Heart right ventricle (tissue), 16 donors: ENCODE measurements at regions of chr5 and their contacts with region 1.

Region 1: DNA sequence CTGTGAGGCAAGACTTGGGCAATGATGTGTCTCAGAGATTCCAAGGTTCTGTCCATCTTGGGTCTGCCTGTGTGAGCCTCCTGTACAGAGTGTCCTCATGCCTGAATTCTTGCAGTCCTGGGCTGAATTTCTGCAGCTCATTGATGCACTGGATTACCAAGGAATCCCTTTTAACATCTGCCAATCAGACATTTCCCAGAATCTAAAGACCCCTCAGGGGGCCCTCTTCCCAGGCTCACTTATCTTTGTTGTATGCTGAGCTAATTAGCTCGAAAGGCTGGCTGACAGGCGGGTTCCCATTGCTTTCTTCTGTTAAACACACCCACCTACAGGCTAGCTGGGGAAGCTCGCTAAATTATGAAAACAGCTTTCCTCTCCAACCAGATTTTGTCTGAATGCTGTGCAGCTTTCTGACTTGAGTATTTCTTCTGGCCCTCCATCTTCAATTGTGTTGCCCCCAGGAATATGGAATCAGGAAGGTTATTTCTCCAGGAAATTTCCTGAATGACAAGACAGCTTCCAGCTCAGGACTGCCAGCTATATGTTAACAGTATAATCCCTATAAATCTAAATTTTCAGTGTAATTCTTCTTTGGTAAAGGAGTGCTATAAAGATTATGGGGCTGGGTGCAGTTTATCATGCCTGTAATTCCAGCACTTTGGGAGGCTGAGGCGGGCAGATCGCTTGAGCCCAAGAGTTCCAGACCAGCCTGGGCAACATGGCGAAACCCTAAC is at the start of gene LIX1:
- DNase-seq: peak in 1 of 2 donors; percentile 23
- ATAC-seq: peak; percentile 64 to 84 (median 76)
- H3K4me3 ChIP-seq: no peak within 1 kb of the TSS
- H3K27ac ChIP-seq: no peak within 1 kb of the TSS
- H3K4me1 ChIP-seq: peaks cover 0 to 8% (median 0%) of the 10 kb centered on the region in 9 donors
- H3K27me3 ChIP-seq: no peaks in the 10 kb centered on the region
- CTCF ChIP-seq: peak; percentile 21 to 73 (median 61)
- total RNA-seq, gene LIX1: not detected

Region 2: GRCh38 chr5:96629774-96630173 is 512.9 kb before region 1 on chr5:
- intact Hi-C with region 1: loop called in 1 of 10 experiments (anchors 10 kb)
- DNase-seq: no peak
- ATAC-seq: peak in 7 of 8 donors; percentile 49 to 84 (median 68)
- H3K4me3 ChIP-seq: no peak overlapping the region
- H3K27ac ChIP-seq: peak overlapping the region in 4 of 10 donors; percentile 5 to 38 (median 14)
- H3K4me1 ChIP-seq: peaks cover 0 to 13% (median 7%) of the 10 kb centered on the region in 9 donors
- H3K27me3 ChIP-seq: no peaks in the 10 kb centered on the region
- CTCF ChIP-seq: no peak

Region 3: GRCh38 chr5:96868603-96869371 is 273.9 kb before region 1 on chr5:
- intact Hi-C with region 1: loop called in 5 of 10 experiments (anchors 5 to 10 kb)
- DNase-seq: peak in 1 of 2 donors; percentile 36
- ATAC-seq: peak; percentile 67 to 92 (median 87)
- H3K4me3 ChIP-seq: no peak overlapping the region
- H3K27ac ChIP-seq: no peak overlapping the region
- H3K4me1 ChIP-seq: no peaks in the 10 kb centered on the region
- H3K27me3 ChIP-seq: no peaks in the 10 kb centered on the region
- CTCF ChIP-seq: peak; percentile 75 to 95 (median 86)

Region 4: DNA sequence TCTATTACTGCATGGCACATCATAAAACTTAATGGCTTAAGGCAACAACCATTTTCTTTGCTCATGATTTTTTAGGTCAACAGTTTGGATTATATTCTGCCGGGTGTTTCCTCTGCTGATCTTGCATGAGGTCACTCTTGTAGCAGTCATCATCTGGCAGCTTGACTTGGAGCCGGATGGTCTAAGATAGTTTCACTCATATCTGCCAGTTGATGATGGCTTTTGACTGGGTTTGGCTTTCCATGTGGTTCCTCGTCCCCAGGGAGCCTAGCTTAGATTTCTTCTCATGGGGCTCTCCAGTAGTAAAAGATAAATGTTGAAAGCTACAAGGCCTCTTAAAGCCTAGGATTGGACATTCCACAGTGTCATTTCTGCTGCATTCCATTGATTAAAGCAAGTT is 179.4 kb before region 1 on chr5:
- intact Hi-C with region 1: no loop called
- DNase-seq: peak; percentile 25 to 85
- ATAC-seq: peak; percentile 71 to 95 (median 92)
- H3K4me3 ChIP-seq: no peak overlapping the region
- H3K27ac ChIP-seq: peak overlapping the region in 8 of 10 donors; percentile 24 to 58 (median 40)
- H3K4me1 ChIP-seq: peaks cover 4 to 68% (median 47%) of the 10 kb centered on the region in 9 donors
- H3K27me3 ChIP-seq: no peaks in the 10 kb centered on the region
- CTCF ChIP-seq: no peak

Region 5: DNA sequence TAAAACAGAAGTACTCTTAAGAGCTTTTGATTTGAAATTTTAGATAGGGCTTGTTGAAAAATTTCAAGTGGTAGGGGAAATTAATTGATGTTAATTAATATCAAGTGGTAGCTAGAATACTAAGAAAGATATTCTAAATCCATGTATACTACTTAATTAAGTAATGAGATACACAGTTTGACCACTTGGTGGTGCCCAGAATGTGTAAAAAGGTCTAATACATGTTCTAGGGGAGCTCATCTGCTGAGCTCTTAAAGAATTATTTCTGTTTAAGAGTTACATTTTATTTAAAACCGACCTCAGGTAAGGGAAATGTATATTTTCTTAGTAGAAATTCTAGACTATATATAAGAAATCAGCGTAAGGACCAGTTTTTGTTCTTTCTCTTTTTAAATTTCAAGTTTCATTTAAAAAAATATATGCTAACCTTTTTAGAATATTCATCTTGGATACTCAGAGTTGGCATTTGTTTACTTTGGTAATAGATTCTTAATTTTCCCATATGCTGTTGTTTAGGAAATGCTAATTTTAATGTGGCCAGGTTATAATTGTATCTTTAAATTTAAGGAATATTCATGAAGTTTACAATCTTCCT is 145.3 kb before region 1 on chr5:
- intact Hi-C with region 1: loop called in 3 of 10 experiments (anchors 5 to 10 kb)
- DNase-seq: peak in 1 of 2 donors; percentile 13
- ATAC-seq: peak in 1 of 8 donors; percentile 58
- H3K4me3 ChIP-seq: no peak overlapping the region
- H3K27ac ChIP-seq: no peak overlapping the region
- H3K4me1 ChIP-seq: no peaks in the 10 kb centered on the region
- H3K27me3 ChIP-seq: no peaks in the 10 kb centered on the region
- CTCF ChIP-seq: peak; percentile 5 to 62 (median 50)

Region 6: DNA sequence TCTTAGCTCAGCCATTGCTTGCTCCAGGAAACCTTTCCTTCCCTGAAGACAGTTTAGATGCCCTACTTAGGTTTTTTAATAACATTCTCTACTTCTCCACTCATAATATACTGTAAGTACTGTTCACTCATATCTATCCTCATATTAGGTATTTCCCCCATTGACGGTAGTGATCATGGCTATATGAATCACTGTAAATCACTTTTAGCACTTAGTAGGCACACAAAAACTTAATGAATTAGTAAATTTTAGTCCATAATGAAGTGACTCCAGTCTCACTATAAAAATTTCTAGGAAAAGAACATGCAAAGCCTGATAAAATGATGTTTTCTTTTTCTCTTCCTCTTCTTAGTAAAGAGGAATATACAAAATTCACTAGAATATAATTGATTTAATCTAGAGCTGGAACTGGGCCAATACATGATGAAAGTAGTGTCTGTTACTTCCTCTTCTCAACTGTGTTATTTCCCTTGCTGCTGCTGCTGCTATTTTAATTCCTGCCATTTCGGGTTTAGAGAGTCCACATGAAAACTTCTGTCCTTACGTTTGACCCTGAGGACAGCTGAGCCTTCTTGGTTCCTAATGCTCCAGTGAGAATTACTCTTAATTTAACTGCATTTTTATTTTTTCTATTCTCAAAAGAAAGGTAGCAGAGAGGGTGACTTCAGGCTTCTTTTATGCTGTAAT is 133.3 kb before region 1 on chr5:
- intact Hi-C with region 1: loop called in 3 of 10 experiments (anchors 10 kb)
- DNase-seq: peak in 1 of 2 donors; percentile 9
- ATAC-seq: peak in 7 of 8 donors; percentile 52 to 76 (median 69)
- H3K4me3 ChIP-seq: no peak overlapping the region
- H3K27ac ChIP-seq: peak overlapping the region in 5 of 10 donors; percentile 2 to 35 (median 23)
- H3K4me1 ChIP-seq: peaks cover 0 to 19% (median 11%) of the 10 kb centered on the region in 9 donors
- H3K27me3 ChIP-seq: no peaks in the 10 kb centered on the region
- CTCF ChIP-seq: no peak

Region 7: DNA sequence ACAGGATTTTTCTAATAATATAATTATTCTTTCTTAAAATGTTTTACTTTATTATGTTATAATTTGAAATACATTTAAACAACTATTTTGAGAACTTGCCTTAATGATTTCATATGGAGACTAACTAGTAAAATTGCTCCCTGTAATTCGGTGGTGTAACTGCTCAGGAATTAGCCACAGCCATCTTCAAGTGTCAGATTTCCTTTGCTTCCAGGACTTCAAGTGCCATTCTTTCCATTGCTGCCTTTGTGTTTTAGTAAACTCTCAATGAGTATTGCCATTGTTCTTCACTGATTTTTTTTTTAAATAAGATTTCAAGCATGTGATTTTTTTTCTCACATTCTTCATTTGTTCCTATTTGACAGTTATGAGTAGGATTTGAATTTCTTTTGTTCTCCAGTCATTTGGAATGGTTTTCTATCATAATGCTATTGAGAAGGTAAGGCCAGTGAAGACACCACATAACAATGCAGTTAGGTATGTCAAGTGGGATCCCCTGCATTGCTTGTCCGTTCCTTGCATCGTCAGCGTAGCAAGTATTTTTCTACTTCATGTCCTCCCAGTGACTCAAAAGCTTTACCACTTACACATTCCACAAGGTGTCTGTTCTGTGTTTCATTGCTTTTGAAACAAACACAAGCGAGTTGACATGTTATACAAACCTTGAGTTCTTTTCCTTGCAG is 123.1 kb before region 1 on chr5:
- intact Hi-C with region 1: loop called in 1 of 10 experiments (anchors 10 kb)
- DNase-seq: no peak
- ATAC-seq: no peak
- H3K4me3 ChIP-seq: no peak overlapping the region
- H3K27ac ChIP-seq: no peak overlapping the region
- H3K4me1 ChIP-seq: no peaks in the 10 kb centered on the region
- H3K27me3 ChIP-seq: no peaks in the 10 kb centered on the region
- CTCF ChIP-seq: no peak

Region 8: DNA sequence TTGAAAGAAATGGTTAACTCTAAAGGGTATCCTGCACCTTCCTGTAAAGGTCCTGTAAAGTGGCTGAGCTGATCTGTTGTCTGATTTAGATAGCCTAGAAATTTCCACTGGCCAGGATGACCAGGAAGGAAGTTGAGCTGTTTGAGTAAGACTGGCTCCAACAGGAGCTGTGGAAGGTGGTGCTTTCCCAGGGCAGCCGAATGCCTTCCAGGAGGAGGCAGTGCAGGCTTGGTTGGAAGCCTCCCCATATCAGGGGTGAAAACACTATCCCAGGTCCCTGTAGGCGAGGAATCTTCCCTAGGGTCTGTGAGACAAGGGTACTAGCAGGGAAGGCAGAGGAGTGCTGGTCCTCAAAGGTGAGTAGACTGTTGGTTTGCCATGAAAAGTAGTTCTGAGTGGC is 98.6 kb before region 1 on chr5:
- intact Hi-C with region 1: loop called in 9 of 10 experiments (anchors 1 to 10 kb)
- DNase-seq: peak; percentile 10 to 16
- ATAC-seq: peak; percentile 61 to 87 (median 82)
- H3K4me3 ChIP-seq: no peak overlapping the region
- H3K27ac ChIP-seq: no peak overlapping the region
- H3K4me1 ChIP-seq: peaks cover 0 to 8% (median 0%) of the 10 kb centered on the region in 9 donors
- H3K27me3 ChIP-seq: no peaks in the 10 kb centered on the region
- CTCF ChIP-seq: peak; percentile 8 to 65 (median 51)

Region 9: DNA sequence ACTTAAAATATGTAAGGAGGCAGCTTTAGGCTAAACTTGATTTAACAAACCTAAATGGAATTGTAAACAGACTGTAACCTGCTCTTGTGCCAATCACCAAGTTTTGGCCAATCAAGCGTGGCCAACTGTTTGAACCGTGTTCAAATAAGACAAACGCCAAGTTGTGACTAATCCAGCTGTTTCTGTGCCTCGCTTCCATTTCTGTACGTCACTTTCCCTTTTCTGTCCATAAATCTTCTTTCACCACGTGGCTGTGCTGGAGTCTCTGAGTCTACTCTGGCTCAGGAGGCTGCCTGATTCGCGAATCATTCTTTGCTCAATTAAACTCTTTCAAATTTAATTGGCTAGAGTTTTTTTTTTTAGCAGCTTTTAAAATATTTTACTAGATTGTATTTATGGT is 71.6 kb before region 1 on chr5:
- intact Hi-C with region 1: no loop called
- DNase-seq: no peak
- ATAC-seq: no peak
- H3K4me3 ChIP-seq: no peak overlapping the region
- H3K27ac ChIP-seq: no peak overlapping the region
- H3K4me1 ChIP-seq: peaks cover 0 to 5% (median 0%) of the 10 kb centered on the region in 9 donors
- H3K27me3 ChIP-seq: no peaks in the 10 kb centered on the region
- CTCF ChIP-seq: no peak